Heart right ventricle (tissue), 16 donors: ENCODE measurements at regions of chr12 and their contacts with region 1.

Region 1: GRCh38 chr12:87274594-87275245 is 754.5 kb downstream of the C12orf50 start:
- DNase-seq: no peak
- ATAC-seq: no peak
- H3K4me3 ChIP-seq: no peak overlapping the region
- H3K27ac ChIP-seq: no peak overlapping the region
- H3K4me1 ChIP-seq: no peaks in the 10 kb centered on the region
- H3K27me3 ChIP-seq: no peaks in the 10 kb centered on the region
- CTCF ChIP-seq: peak in 8 of 9 donors; percentile 20 to 51 (median 39)

Region 2: DNA sequence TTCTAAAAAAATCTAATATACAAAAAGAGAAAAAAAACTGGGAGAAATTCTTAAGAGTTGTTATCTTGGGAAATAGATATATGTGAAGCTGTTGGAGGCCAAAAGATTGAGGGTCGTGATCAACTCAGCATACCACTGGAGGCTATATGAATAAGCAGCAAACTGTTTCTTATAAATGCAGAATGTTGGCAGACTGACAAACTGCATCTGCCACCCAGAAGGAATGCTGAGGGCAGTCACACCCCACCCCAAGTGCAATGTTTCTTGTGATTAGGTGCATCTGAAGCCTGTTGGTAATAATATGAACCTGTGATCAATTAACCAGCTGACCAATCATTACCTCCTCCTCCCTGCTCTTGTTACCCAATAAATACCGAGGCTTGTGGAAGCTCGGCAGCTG is 199.9 kb before region 1 on chr12:
- intact Hi-C with region 1: no loop called
- DNase-seq: no peak
- ATAC-seq: no peak
- H3K4me3 ChIP-seq: no peak overlapping the region
- H3K27ac ChIP-seq: no peak overlapping the region
- H3K4me1 ChIP-seq: no peaks in the 10 kb centered on the region
- H3K27me3 ChIP-seq: no peaks in the 10 kb centered on the region
- CTCF ChIP-seq: no peak

Region 3: DNA sequence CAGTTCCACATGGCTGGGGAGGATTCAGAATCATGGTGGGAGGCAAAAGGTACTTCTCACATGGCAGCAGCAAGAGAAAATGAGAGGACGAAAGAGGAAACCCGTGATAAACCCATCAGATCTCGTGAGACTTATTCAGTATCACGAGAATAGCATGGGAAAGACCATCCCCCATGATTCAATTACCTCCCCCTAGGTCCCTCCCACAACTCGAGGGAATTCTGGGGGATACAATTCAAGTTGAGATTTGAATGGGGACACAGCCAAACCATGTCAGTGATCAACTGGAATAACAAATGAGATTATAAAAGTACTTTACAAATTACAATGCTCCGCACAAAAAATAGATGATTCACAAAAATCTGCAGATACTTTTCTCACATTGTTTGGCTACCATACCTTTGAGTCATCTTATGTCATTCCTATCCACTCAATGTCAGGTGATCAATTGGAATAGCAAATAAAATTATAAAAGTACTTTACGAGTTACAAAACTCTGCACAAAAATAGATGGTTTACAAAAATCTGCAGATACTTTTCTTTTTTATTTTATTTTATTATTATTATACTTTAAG is 415.6 kb after region 1 on chr12:
- intact Hi-C with region 1: no loop called
- DNase-seq: no peak
- ATAC-seq: no peak
- H3K4me3 ChIP-seq: no peak overlapping the region
- H3K27ac ChIP-seq: no peak overlapping the region
- H3K4me1 ChIP-seq: no peaks in the 10 kb centered on the region
- H3K27me3 ChIP-seq: no peaks in the 10 kb centered on the region
- CTCF ChIP-seq: no peak

Region 4: DNA sequence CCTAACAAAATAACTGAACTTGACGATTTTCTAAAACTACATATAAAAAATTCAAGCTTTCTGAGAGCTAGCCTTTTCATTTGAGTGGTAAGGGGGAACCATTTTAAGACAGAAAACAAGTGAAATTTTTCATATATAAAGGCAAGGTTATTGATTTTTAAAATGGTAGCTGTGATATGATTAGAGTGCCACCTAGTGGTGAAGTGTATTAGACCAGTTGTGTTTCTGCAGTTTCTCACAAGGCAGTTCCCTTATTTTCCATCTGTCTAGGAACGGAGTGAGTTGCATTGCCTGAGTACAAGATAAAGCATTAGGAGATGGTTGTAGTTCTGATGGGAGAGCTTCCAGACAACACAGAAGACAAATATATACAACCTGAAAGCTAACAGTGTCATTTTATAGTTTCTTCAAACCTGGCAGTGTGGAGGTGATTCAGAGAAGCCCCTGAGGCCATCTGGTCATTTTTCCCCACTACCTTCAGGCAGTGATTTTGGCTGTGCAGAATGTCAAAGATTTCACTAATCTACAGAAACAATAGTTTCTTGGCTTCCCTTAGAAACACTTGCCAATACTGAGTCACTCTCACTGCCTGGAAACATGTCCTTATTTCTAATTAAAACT is 573.6 kb after region 1 on chr12:
- intact Hi-C with region 1: loop called in 1 of 10 experiments (anchors 10 kb)
- DNase-seq: peak in 1 of 2 donors; percentile 5
- ATAC-seq: peak in 1 of 8 donors; percentile 48
- H3K4me3 ChIP-seq: no peak overlapping the region
- H3K27ac ChIP-seq: no peak overlapping the region
- H3K4me1 ChIP-seq: peaks cover 0 to 5% (median 0%) of the 10 kb centered on the region in 9 donors
- H3K27me3 ChIP-seq: no peaks in the 10 kb centered on the region
- CTCF ChIP-seq: peak; percentile 58 to 90 (median 81)